ENCODE measurements at regions of chr10 and their contacts with region 1.

Region 1: GRCh38 chr10:33115738-33116719 is 158.0 kb upstream of the ITGB1 start:
- DNase-seq: peak in 6 of 9 experiments; percentile 26 to 72 (median 50)
- ATAC-seq: peak; percentile 10
- H3K4me3 ChIP-seq: no peak overlapping the region
- H3K4me3 Mint-ChIP-seq: peak overlapping the region; percentile 32
- H3K27ac ChIP-seq: peak overlapping the region in 1 of 2 experiments; percentile 76
- H3K27ac Mint-ChIP-seq: peak overlapping the region; percentile 76
- H3K4me1 ChIP-seq: peaks cover 40% of the 10 kb centered on the region
- H3K4me1 Mint-ChIP-seq: peaks cover 81% of the 10 kb centered on the region
- H3K27me3 ChIP-seq: no peaks in the 10 kb centered on the region
- H3K27me3 Mint-ChIP-seq: no peaks in the 10 kb centered on the region
- CTCF ChIP-seq: peak; percentile 42

Region 2: DNA sequence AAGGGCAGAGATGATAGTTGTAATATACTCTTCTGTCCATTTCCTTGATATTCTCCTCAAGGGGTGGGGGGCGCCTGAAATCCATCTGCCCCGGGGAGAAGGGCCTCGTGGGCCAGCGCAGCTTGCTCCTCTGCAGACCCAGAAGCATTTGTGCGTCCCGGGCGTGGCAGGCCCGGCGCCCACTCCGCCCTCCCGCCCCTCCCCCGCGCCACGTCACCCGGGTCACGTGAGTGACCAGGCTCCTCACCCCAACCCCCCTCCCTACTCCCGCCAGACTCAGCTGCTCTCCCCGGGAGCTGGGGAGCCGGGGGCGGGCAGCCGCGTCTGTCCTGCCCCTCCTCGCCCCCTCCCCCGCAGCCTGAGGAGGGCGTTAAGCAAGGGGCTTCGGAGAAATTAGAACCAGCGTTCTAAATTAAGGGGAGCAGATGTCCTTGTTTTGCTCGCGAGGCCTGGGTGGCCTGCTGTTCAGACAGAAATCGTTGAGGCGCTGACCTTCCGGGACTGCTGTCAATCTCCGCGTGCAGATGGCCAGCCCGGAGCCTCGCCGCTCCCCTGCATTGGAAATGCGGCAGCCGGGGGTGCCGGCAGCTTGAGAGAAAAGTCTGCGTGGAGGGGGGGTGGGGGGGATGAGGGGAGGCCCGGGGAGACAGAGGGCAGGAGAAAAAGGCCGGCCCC is 1982.3 kb before region 1 on chr10:
- CTCF ChIA-PET with region 1: no interaction called
- POLR2A ChIA-PET with region 1: no interaction called
- intact Hi-C with region 1: loop called in 1 of 2 experiments (anchors 5 kb)
- DNase-seq: peak; percentile 37 to 84 (median 68)
- ATAC-seq: peak; percentile 70
- H3K4me3 ChIP-seq: peak overlapping the region; percentile 67 to 71
- H3K4me3 Mint-ChIP-seq: peak overlapping the region; percentile 81
- H3K27ac ChIP-seq: peak overlapping the region; percentile 33 to 65
- H3K27ac Mint-ChIP-seq: peak overlapping the region; percentile 76
- H3K4me1 ChIP-seq: peaks cover 32% of the 10 kb centered on the region
- H3K4me1 Mint-ChIP-seq: peaks cover 37% of the 10 kb centered on the region
- H3K27me3 ChIP-seq: no peaks in the 10 kb centered on the region
- H3K27me3 Mint-ChIP-seq: no peaks in the 10 kb centered on the region
- CTCF ChIP-seq: no peak

Region 3: DNA sequence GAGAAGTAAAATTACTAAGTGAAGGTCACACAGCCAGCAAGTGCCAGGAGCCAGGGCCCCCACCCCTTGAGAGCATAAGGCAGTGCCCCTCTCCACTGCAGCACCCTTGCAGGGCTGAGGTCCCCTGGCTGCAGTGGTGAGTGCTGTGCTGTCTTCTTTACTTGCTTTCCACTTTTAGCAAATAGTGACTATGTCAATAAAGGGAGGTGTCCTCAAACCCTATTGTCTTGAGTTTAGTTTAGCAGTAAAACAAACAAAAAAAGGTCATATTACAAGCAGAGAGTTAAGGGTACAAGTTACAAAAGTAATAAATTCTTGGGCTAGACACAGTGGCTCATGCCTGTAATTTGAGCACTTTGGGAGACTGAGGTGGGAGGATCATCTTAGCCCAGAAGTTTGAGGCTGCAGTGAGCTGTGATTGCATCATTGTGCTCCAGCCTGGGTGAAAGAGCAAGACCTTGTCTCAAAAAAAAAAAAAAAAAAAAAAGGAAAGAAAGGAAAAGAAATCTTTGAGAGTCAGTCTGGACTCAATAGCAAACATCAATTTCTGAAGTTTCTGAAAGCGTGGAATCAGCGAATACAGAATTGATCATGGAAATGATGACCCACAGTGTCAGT is 1020.8 kb before region 1 on chr10:
- CTCF ChIA-PET with region 1: no interaction called
- POLR2A ChIA-PET with region 1: no interaction called
- intact Hi-C with region 1: no loop called
- DNase-seq: no peak
- ATAC-seq: no peak
- H3K4me3 ChIP-seq: no peak overlapping the region
- H3K4me3 Mint-ChIP-seq: no peak overlapping the region
- H3K27ac ChIP-seq: no peak overlapping the region
- H3K27ac Mint-ChIP-seq: no peak overlapping the region
- H3K4me1 ChIP-seq: no peaks in the 10 kb centered on the region
- H3K4me1 Mint-ChIP-seq: no peaks in the 10 kb centered on the region
- H3K27me3 ChIP-seq: no peaks in the 10 kb centered on the region
- H3K27me3 Mint-ChIP-seq: peaks cover 12% of the 10 kb centered on the region
- CTCF ChIP-seq: no peak

Region 4: DNA sequence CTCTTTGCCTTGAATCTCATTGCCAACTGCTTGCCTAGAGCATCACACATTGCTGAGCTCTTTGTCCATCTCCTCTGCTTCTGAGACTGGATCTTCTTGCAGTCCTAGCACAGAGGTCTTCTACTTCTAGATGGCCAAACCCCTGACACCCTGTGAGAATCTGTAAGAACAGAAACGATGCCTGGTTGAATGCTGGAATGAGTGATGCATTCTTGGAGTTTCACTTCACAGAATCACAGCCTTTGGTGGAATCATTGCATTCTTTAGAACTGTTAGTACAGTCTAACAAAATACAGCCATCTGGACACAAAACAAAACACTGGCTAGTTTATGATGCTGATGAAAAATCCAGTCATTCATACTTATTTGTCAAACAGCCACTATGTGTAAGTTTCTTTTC is 16.3 kb before region 1 on chr10:
- CTCF ChIA-PET with region 1: interaction called, 4 read pairs
- POLR2A ChIA-PET with region 1: no interaction called
- intact Hi-C with region 1: loop called in 1 of 2 experiments (anchors 2 kb)
- DNase-seq: no peak
- ATAC-seq: no peak
- H3K4me3 ChIP-seq: no peak overlapping the region
- H3K4me3 Mint-ChIP-seq: no peak overlapping the region
- H3K27ac ChIP-seq: peak overlapping the region in 1 of 2 experiments; percentile 17
- H3K27ac Mint-ChIP-seq: peak overlapping the region; percentile 52
- H3K4me1 ChIP-seq: peaks cover 12% of the 10 kb centered on the region
- H3K4me1 Mint-ChIP-seq: peaks cover 26% of the 10 kb centered on the region
- H3K27me3 ChIP-seq: no peaks in the 10 kb centered on the region
- H3K27me3 Mint-ChIP-seq: no peaks in the 10 kb centered on the region
- CTCF ChIP-seq: no peak

Region 5: GRCh38 chr10:33134011-33134751 is 18.2 kb after region 1 on chr10:
- CTCF ChIA-PET with region 1: interaction called, 20 read pairs
- POLR2A ChIA-PET with region 1: interaction called, 6 read pairs
- intact Hi-C with region 1: loop called in 1 of 2 experiments (anchors 1 kb)
- DNase-seq: peak in 8 of 9 experiments; percentile 51 to 87 (median 72)
- ATAC-seq: peak; percentile 67
- H3K4me3 ChIP-seq: no peak overlapping the region
- H3K4me3 Mint-ChIP-seq: no peak overlapping the region
- H3K27ac ChIP-seq: peak overlapping the region; percentile 30 to 55
- H3K27ac Mint-ChIP-seq: peak overlapping the region; percentile 66
- H3K4me1 ChIP-seq: peaks cover 48% of the 10 kb centered on the region
- H3K4me1 Mint-ChIP-seq: peaks cover 70% of the 10 kb centered on the region
- H3K27me3 ChIP-seq: no peaks in the 10 kb centered on the region
- H3K27me3 Mint-ChIP-seq: no peaks in the 10 kb centered on the region
- CTCF ChIP-seq: no peak

Region 6: DNA sequence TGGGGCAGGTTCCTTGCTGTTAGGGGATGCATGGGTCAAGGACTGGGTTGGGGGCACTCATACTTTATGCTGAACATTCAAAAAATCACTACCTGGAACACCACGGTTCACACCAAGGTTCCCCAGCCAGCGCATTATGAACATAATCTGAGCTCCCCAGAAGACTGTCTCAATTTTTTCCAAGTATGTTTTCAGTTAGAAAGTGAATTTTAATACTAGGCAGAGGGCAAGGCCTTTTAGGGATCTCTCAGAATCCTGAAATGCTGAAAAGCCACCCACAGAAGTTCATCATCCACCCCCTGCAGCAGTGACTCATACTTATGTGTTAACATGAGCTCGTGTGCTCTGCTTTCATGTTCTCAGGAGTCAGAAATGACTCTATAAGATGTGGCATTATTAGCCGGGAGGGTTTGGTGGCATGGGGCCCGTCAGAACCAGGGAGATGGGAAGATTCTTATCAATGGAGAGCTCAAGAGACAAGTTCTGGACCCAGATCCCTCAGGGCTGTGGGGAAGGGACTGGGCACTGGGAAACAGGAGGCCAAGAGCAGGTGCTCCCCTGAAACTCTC is 27.2 kb after region 1 on chr10:
- CTCF ChIA-PET with region 1: interaction called, 20 read pairs
- POLR2A ChIA-PET with region 1: interaction called, 6 read pairs
- intact Hi-C with region 1: loop called in 1 of 2 experiments (anchors 1 kb)
- DNase-seq: peak in 6 of 9 experiments; percentile 21 to 65 (median 42)
- ATAC-seq: peak; percentile 9
- H3K4me3 ChIP-seq: no peak overlapping the region
- H3K4me3 Mint-ChIP-seq: no peak overlapping the region
- H3K27ac ChIP-seq: no peak overlapping the region
- H3K27ac Mint-ChIP-seq: peak overlapping the region; percentile 55
- H3K4me1 ChIP-seq: peaks cover 33% of the 10 kb centered on the region
- H3K4me1 Mint-ChIP-seq: peaks cover 49% of the 10 kb centered on the region
- H3K27me3 ChIP-seq: no peaks in the 10 kb centered on the region
- H3K27me3 Mint-ChIP-seq: no peaks in the 10 kb centered on the region
- CTCF ChIP-seq: no peak

Region 7: DNA sequence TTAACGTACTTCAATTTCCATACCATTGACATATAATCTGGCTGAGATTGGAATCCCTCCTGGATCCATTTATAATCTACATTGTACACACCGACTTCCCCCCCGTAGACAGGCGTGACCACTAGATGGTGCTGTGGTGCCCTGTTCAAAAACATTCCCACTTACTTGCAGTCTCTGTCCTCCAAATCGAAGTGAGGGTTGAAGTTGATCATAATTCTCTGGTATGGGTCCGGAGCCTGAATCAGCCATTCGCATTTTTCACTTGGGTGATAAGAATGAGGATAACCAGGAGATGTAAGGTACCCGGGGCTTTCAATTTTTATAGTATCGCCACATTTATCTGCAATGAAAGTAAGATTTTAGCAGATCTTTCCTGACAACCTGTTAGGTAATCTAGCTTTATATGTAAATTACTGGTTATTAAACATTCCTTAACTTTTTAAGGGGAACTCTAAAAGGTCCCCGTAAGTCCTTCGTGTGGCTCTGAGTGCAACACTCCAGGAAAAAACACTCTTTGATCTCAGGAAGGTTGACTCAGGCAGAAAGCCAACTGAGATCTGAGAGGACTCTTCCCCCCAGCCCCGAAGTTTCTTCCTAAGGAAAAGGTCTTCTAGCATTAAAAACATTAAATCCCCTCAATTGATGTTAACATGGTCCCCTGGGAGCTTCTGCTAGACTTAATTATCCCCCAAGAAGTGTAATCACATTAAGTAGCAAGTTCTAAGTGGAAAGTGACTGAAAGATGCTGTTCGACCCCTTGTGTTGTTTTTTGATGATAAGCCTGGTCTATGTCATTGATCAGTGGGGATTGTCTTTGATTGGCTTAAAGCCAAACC is 214.7 kb after region 1 on chr10:
- CTCF ChIA-PET with region 1: interaction called, 3 read pairs
- POLR2A ChIA-PET with region 1: no interaction called
- intact Hi-C with region 1: loop called in 1 of 2 experiments (anchors 5 kb)
- DNase-seq: peak; percentile 48 to 85 (median 74)
- ATAC-seq: peak; percentile 56
- H3K4me3 ChIP-seq: no peak overlapping the region
- H3K4me3 Mint-ChIP-seq: no peak overlapping the region
- H3K27ac ChIP-seq: no peak overlapping the region
- H3K27ac Mint-ChIP-seq: no peak overlapping the region
- H3K4me1 ChIP-seq: peaks cover 15% of the 10 kb centered on the region
- H3K4me1 Mint-ChIP-seq: peaks cover 18% of the 10 kb centered on the region
- H3K27me3 ChIP-seq: peaks cover 16 to 17% of the 10 kb centered on the region in 2 experiments
- H3K27me3 Mint-ChIP-seq: peaks cover 47% of the 10 kb centered on the region
- CTCF ChIP-seq: peak; percentile 96

Region 8: GRCh38 chr10:33402220-33403073 is 286.4 kb after region 1 on chr10:
- CTCF ChIA-PET with region 1: no interaction called
- POLR2A ChIA-PET with region 1: no interaction called
- intact Hi-C with region 1: no loop called
- DNase-seq: no peak
- ATAC-seq: no peak
- H3K4me3 ChIP-seq: no peak overlapping the region
- H3K4me3 Mint-ChIP-seq: no peak overlapping the region
- H3K27ac ChIP-seq: no peak overlapping the region
- H3K27ac Mint-ChIP-seq: no peak overlapping the region
- H3K4me1 ChIP-seq: no peaks in the 10 kb centered on the region
- H3K4me1 Mint-ChIP-seq: no peaks in the 10 kb centered on the region
- H3K27me3 ChIP-seq: no peaks in the 10 kb centered on the region
- H3K27me3 Mint-ChIP-seq: peaks cover 17% of the 10 kb centered on the region
- CTCF ChIP-seq: no peak

Measured in CD8-positive, alpha-beta T cell (primary cell).